ENCODE measurements at regions of chr7 and their contacts with region 1.

Region 1: GRCh38 chr7:45259966-45260646 is 102.5 kb downstream of the RAMP3 start:
- DNase-seq: peak; percentile 76
- H3K4me3 Mint-ChIP-seq: no peak overlapping the region
- H3K27ac Mint-ChIP-seq: no peak overlapping the region
- H3K4me1 Mint-ChIP-seq: peaks cover 5% of the 10 kb centered on the region
- H3K27me3 Mint-ChIP-seq: peaks cover 11% of the 10 kb centered on the region

Region 2: GRCh38 chr7:45157653-45158401 is 102.3 kb before region 1 on chr7 and contains the start of gene RAMP3:
- CTCF ChIA-PET with region 1: interaction called, 12 read pairs
- POLR2A ChIA-PET with region 1: no interaction called
- DNase-seq: no peak
- H3K4me3 Mint-ChIP-seq: no peak within 1 kb of the TSS
- H3K27ac Mint-ChIP-seq: no peak within 1 kb of the TSS
- H3K4me1 Mint-ChIP-seq: peaks cover 14% of the 10 kb centered on the region
- H3K27me3 Mint-ChIP-seq: peaks cover 23% of the 10 kb centered on the region
- total RNA-seq, gene RAMP3: not detected

Region 3: GRCh38 chr7:45239486-45239885 is 20.6 kb before region 1 on chr7:
- CTCF ChIA-PET with region 1: no interaction called
- POLR2A ChIA-PET with region 1: no interaction called
- DNase-seq: no peak
- H3K4me3 Mint-ChIP-seq: no peak overlapping the region
- H3K27ac Mint-ChIP-seq: no peak overlapping the region
- H3K4me1 Mint-ChIP-seq: no peaks in the 10 kb centered on the region
- H3K27me3 Mint-ChIP-seq: peaks cover 35% of the 10 kb centered on the region